Prostate gland (tissue), 2 donors: ENCODE measurements at regions of chr12 and their contacts with region 1.

Region 1: GRCh38 chr12:25958428-25959070 is at the start of gene RASSF8:
- DNase-seq: peak; percentile 68
- H3K4me3 ChIP-seq: peak within 1 kb of the TSS; percentile 59 to 79
- H3K27ac ChIP-seq: peak within 1 kb of the TSS; percentile 78 to 85
- H3K4me1 ChIP-seq: no peaks in the 10 kb centered on the region
- H3K27me3 ChIP-seq: no peaks in the 10 kb centered on the region
- CTCF ChIP-seq: no peak
- POLR2A ChIP-seq: peak; percentile 12
- total RNA-seq, gene RASSF8: 26.0 to 62.1 TPM

Region 2: GRCh38 chr12:26028953-26029735 is 70.6 kb after region 1 on chr12:
- intact Hi-C with region 1: loop called (anchors 2 kb)
- DNase-seq: peak; percentile 42
- H3K4me3 ChIP-seq: no peak overlapping the region
- H3K27ac ChIP-seq: no peak overlapping the region
- H3K4me1 ChIP-seq: peaks cover 8% of the 10 kb centered on the region
- H3K27me3 ChIP-seq: no peaks in the 10 kb centered on the region
- CTCF ChIP-seq: peak; percentile 53 to 88 (median 79)
- POLR2A ChIP-seq: no peak